ENCODE measurements at regions of chr19 and their contacts with region 1.

Region 1: DNA sequence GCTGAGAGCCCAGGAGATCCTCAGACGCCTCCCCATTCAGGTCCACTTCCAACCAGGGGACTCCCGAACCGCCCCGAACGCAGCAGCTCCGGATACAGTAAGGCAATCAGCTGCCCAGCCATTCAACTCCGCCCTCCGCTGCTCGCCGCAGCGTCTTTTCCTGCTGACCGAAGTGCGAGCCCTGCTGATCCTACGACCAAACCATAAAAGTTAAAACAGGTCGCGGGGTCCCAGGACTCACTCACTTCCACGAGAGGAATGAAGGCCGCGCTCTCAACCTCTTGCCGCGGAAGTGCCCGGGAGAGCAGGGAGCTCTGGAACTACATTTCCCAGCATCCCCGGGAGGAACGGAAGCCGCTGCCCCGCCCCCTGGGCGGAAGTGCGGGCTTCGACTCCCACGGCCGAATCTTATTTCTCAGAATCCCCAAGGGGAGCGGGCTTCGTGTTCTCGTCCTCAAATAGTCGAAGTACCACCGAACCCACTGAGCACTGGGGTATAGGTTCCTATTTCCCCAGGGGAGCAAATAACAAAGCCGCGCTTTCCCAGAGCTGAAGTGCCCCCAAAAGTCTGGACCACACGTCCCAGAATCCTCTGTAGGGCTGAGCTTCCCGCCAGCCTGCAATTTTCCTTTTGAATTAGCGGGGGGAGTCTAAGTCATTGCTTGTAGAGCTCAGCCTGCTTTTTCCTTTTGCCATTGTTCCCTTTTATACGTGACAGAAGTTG is at the start of gene ZNF45:
- DNase-seq: peak; percentile 85
- H3K4me3 ChIP-seq: peak within 1 kb of the TSS; percentile 78 to 83 (median 81)
- H3K27ac ChIP-seq: no peak within 1 kb of the TSS
- H3K4me1 ChIP-seq: peaks cover 8% of the 10 kb centered on the region
- H3K27me3 ChIP-seq: no peaks in the 10 kb centered on the region
- CTCF ChIP-seq: no peak
- total RNA-seq, gene ZNF45: 10.6 to 13.3 TPM

Region 2: GRCh38 chr19:43826787-43827754 is 108.1 kb before region 1 on chr19 and contains the start of gene ZNF283:
- CTCF ChIA-PET with region 1: no interaction called
- dilution Hi-C with region 1: no loop called
- in situ Hi-C with region 1: no loop called
- intact Hi-C with region 1: loop called (anchors 10 kb)
- DNase-seq: peak; percentile 91
- H3K4me3 ChIP-seq: peak within 1 kb of the TSS; percentile 56 to 72 (median 63)
- H3K27ac ChIP-seq: peak within 1 kb of the TSS; percentile 9
- H3K4me1 ChIP-seq: no peaks in the 10 kb centered on the region
- H3K27me3 ChIP-seq: no peaks in the 10 kb centered on the region
- CTCF ChIP-seq: no peak
- total RNA-seq, gene ZNF283: 10.8 to 13.2 TPM

Region 3: DNA sequence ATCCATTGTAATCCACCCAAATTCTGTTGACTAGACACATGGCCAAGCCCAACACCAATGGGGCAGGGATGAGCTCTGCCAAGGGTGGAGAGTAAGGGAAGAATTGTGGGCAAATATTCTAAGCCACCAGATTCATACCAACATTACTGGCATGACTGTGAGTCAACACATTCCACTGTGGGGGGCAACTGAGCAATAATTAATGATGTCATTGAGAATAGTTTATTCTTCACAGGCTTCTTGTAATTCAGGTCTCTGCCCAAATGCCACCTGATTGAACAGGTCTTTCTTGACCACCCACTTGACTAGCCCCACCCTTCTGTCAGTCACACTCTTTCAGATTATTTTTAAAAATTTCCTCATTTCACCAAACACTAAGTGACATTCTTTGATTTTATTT is 79.5 kb before region 1 on chr19:
- CTCF ChIA-PET with region 1: no interaction called
- dilution Hi-C with region 1: no loop called
- in situ Hi-C with region 1: no loop called
- intact Hi-C with region 1: no loop called
- DNase-seq: no peak
- H3K4me3 ChIP-seq: no peak overlapping the region
- H3K27ac ChIP-seq: no peak overlapping the region
- H3K4me1 ChIP-seq: no peaks in the 10 kb centered on the region
- H3K27me3 ChIP-seq: no peaks in the 10 kb centered on the region
- CTCF ChIP-seq: no peak

Region 4: DNA sequence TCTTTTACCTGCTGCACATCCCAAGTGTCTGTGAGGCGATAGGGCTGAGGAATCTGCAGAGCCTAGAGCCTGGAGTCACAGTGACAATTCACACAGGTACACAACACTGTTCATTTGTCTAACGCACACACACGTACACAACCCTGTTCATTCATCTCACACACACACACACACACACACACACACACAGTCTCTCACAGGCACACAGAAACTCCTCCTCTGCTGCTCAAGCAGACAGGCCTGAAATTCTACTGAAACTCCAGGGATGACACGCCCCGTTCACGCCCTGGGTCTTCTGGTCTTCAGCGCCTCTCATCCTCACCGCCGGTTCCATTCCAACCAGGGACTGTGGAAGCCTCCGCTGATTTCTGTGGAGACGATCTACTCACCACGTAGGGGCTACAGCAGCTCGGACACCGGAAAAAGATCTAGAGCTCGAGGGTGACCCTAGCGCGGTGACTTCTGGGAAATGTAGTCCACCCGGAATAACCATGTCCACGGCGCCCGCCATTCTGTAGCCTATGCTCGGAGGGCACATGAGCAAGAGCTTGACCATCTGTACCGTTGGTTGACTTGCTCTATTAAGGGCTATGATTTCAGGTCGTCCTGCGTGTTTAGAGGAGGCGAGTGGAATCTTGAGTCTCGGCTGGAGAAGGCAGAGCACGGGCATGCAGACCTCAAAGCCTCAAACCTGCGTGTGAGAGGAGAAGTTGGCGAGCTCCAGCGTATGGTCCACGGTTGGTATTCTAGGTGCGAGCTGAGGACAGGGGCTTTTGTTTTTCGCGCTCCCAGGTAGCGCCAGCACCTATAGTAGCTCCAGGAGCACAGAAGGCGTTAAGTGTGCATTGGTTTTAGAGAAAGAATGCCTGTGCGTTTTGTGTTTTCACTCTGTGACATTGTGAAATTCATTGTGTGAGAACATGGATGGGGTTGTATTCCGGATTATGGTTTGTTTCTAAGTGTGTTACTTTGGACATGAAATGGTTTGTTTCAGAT is 33.5 kb before region 1 on chr19:
- CTCF ChIA-PET with region 1: interaction called, 4 read pairs
- dilution Hi-C with region 1: no loop called
- in situ Hi-C with region 1: no loop called
- intact Hi-C with region 1: loop called (anchors 1 kb)
- DNase-seq: peak; percentile 84
- H3K4me3 ChIP-seq: peak overlapping the region; percentile 39 to 56 (median 56)
- H3K27ac ChIP-seq: no peak overlapping the region
- H3K4me1 ChIP-seq: no peaks in the 10 kb centered on the region
- H3K27me3 ChIP-seq: no peaks in the 10 kb centered on the region
- CTCF ChIP-seq: no peak

Region 5: GRCh38 chr19:43950834-43951645 is 15.9 kb after region 1 on chr19 and contains the start of gene ZNF221:
- CTCF ChIA-PET with region 1: interaction called, 3 read pairs
- dilution Hi-C with region 1: no loop called
- in situ Hi-C with region 1: no loop called
- intact Hi-C with region 1: loop called (anchors 1 kb)
- DNase-seq: peak; percentile 96
- H3K4me3 ChIP-seq: peak within 1 kb of the TSS; percentile 79 to 85 (median 84)
- H3K27ac ChIP-seq: peak within 1 kb of the TSS; percentile 5
- H3K4me1 ChIP-seq: no peaks in the 10 kb centered on the region
- H3K27me3 ChIP-seq: no peaks in the 10 kb centered on the region
- CTCF ChIP-seq: peak in 1 of 2 donors; percentile 44
- total RNA-seq, gene ZNF221: 4.1 to 9.3 TPM

Region 6: GRCh38 chr19:44072543-44073401 is 137.6 kb after region 1 on chr19:
- CTCF ChIA-PET with region 1: no interaction called
- dilution Hi-C with region 1: no loop called
- in situ Hi-C with region 1: no loop called
- intact Hi-C with region 1: no loop called
- DNase-seq: peak; percentile 5
- H3K4me3 ChIP-seq: peak overlapping the region; percentile 62 to 84 (median 75)
- H3K27ac ChIP-seq: peak overlapping the region; percentile 2
- H3K4me1 ChIP-seq: peaks cover 9% of the 10 kb centered on the region
- H3K27me3 ChIP-seq: no peaks in the 10 kb centered on the region
- CTCF ChIP-seq: peak in 1 of 2 donors; percentile 16

Measured in mammary epithelial cell (primary cell).